Breast epithelium (tissue), 4 donors: ENCODE measurements at regions of chr4 and their contacts with region 1.

Region 1: GRCh38 chr4:53653484-53654053 is 62.3 kb upstream of the LNX1 start:
- DNase-seq: peak in 1 of 2 donors; percentile 62
- H3K4me3 ChIP-seq: no peak overlapping the region
- H3K27ac ChIP-seq: peak overlapping the region; percentile 79 to 82
- H3K4me1 ChIP-seq: no peaks in the 10 kb centered on the region
- H3K27me3 ChIP-seq: no peaks in the 10 kb centered on the region
- CTCF ChIP-seq: peak in 1 of 3 donors; percentile 25
- POLR2A ChIP-seq: no peak

Region 2: DNA sequence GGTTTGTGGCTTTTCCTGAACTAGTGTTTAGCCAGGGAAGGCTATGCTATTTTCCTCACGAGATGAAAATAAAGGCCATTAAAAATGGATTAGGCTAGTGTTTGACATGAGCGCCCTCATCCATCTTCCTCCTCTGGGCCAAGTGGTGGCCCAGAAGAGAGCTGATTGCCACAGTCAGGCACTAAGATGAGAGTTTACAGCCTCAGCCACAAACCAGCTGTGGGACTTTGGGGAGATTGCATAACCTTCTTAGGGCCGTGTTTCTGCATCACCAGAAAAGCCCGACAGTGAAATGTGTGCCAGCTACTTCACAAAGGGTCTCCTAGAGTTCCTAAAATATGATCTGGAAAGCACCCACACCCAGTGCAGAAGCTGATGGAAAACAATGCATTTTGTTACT is 20.0 kb before region 1 on chr4:
- intact Hi-C with region 1: no loop called
- DNase-seq: no peak
- H3K4me3 ChIP-seq: no peak overlapping the region
- H3K27ac ChIP-seq: peak overlapping the region in 1 of 2 donors; percentile 46
- H3K4me1 ChIP-seq: no peaks in the 10 kb centered on the region
- H3K27me3 ChIP-seq: no peaks in the 10 kb centered on the region
- CTCF ChIP-seq: no peak
- POLR2A ChIP-seq: no peak

Region 3: GRCh38 chr4:53702334-53703266 is 49.0 kb after region 1 on chr4:
- intact Hi-C with region 1: loop called (anchors 2 kb)
- DNase-seq: peak; percentile 61 to 76
- H3K4me3 ChIP-seq: peak overlapping the region; percentile 15 to 55 (median 36)
- H3K27ac ChIP-seq: peak overlapping the region; percentile 86 to 88
- H3K4me1 ChIP-seq: peaks cover 0 to 16% of the 10 kb centered on the region in 2 donors
- H3K27me3 ChIP-seq: no peaks in the 10 kb centered on the region
- CTCF ChIP-seq: no peak
- POLR2A ChIP-seq: no peak